Naive thymus-derived CD8-positive, alpha-beta T cell (primary cell): ENCODE measurements at regions of chr11 and their contacts with region 1.

Region 1: GRCh38 chr11:1852877-1853276 is at the start of gene LSP1:
- DNase-seq: peak; percentile 51 to 92 (median 82)
- ATAC-seq: peak; percentile 69 to 76
- H3K4me3 Mint-ChIP-seq: peak within 1 kb of the TSS; percentile 95 to 100 (median 99)
- H3K27ac Mint-ChIP-seq: peak within 1 kb of the TSS; percentile 93 to 100 (median 98)
- H3K4me1 Mint-ChIP-seq: peaks cover 14 to 77% (median 75%) of the 10 kb centered on the region in 4 donors
- H3K27me3 Mint-ChIP-seq: no peaks in the 10 kb centered on the region
- polyA plus RNA-seq, gene LSP1: 326 to 438 (median 338) TPM

Region 2: GRCh38 chr11:1782831-1783724 is 69.8 kb before region 1 on chr11:
- POLR2A ChIA-PET with region 1: no interaction called
- DNase-seq: no peak
- ATAC-seq: no peak
- H3K4me3 Mint-ChIP-seq: no peak overlapping the region
- H3K27ac Mint-ChIP-seq: no peak overlapping the region
- H3K4me1 Mint-ChIP-seq: peaks cover 3 to 32% (median 8%) of the 10 kb centered on the region in 4 donors
- H3K27me3 Mint-ChIP-seq: no peaks in the 10 kb centered on the region

Region 3: DNA sequence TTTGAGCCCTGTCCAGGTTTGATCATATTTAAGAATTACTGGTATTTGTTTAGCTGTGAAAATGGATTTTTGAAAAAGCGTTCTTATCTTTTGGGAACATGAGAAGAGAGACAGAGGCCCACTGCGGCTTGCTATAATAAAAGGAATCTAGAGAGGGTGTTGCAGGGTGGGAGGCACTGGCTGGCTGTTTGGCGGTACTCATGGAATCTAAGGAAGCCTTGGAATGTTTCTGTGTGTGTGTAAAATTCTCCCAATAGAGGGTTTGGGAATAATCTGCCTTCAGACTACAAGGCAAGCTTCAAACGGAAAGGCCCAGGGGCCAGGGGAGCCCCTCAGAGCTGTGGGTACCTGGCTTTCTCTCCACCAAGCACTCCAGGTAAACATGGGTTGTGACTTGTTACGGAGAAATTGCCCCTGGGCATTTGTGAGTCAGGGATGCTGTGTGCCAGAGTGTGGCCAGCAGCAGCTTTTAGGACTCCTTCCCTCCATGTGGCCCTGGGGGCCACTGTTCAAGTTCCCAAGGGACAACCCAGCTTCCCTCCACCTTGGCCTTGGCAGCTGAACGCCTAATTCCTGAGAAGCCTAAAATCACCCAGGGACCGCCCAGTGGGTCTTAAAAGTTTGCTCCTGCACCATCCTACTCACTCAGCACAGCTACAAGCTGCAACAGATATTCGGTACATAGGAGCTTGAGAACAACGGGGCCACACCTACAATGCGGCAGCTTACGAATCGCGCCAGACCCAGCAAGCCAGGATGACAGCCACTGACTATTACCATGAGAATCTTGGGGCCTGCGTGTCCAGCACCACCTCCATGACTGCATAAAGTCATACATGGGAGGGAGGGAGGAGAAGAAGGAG is 32.2 kb before region 1 on chr11:
- POLR2A ChIA-PET with region 1: no interaction called
- DNase-seq: no peak
- ATAC-seq: no peak
- H3K4me3 Mint-ChIP-seq: no peak overlapping the region
- H3K27ac Mint-ChIP-seq: no peak overlapping the region
- H3K4me1 Mint-ChIP-seq: peaks cover 0 to 6% (median 0%) of the 10 kb centered on the region in 4 donors
- H3K27me3 Mint-ChIP-seq: peaks cover 0 to 5% (median 0%) of the 10 kb centered on the region in 5 donors

Region 4: DNA sequence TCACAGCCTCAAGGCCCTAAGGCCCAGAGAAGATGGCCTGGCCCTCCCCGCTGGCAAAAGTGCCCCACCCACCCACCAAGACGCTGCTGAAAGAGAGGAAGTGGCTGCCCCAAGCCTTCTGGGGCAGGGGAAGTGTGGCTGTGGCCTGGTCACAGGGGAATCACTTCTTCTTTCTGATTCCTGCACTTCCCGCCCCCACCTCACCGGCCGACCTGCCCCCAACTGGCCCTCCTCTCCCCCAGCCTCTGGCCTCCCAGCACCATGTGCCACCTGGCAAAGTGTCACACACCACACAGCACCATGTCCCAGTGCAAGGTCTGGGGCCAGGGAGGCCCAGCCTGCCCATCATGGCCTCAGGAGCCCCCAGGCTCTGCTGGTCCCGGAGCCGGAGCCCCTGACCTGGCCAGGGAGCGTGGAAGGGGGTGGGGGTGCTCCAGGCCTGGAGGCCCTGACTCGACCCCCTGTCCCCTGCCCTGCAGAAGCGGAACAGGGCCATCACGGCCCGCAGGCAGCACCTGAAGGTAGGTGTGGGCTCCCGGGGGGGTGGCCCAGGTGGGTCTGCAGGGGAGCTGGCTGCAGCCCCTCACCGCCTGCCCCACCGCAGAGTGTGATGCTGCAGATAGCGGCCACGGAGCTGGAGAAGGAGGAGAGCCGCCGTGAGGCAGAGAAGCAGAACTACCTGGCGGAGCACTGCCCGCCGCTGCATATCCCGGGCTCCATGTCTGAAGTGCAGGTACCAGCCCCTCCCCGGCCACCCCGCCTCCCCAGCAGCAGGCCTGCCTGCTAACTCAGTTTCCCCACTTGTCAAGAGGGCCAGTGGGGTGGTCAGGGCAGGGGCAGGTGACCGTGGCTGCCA is 12.7 kb before region 1 on chr11:
- POLR2A ChIA-PET with region 1: interaction called, 14 read pairs
- DNase-seq: peak in 1 of 10 donors; percentile 10
- ATAC-seq: no peak
- H3K4me3 Mint-ChIP-seq: peak overlapping the region in 3 of 10 donors; percentile 7 to 47 (median 14)
- H3K27ac Mint-ChIP-seq: peak overlapping the region in 5 of 10 donors; percentile 23 to 87 (median 53)
- H3K4me1 Mint-ChIP-seq: peaks cover 25 to 35% (median 31%) of the 10 kb centered on the region in 4 donors
- H3K27me3 Mint-ChIP-seq: no peaks in the 10 kb centered on the region

Region 5: DNA sequence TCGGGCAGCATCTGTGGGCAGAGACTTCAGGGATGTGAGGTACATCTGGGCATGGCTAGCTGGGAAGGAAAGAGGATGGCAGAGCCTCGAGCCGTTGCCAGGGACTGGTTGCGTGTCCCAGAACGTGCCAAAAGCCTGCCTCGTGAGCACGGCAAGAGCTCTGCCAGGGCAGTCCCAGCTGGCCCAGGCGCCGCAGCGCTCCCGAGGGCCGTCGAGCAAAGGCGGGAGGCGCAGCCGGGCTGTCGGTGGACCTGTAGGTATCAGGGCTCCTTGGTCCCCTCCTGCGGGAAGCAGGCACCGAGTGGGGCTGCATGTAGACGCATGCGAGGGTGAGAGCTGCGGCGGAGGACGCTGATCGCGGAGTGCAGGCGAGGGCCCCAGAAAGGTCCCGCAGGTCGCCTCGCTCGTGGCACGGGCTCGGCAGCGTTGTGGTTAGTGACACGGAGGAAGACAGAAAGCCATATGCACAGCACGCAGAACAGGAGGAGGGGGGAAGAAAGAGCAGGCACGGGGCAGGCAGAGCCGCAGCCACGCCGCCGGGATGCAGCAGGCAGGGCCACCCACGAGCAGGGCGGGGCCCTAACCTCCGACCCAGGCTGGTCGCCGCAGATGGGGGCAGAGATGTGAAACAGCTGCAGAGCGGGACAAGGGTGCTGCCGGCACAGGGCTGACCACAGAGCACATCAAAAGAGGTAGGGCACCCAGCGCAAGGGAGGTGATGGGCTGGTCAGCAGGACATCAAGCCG is 18.0 kb after region 1 on chr11:
- POLR2A ChIA-PET with region 1: interaction called, 31 read pairs
- DNase-seq: peak in 9 of 10 donors; percentile 36 to 78 (median 51)
- ATAC-seq: peak; percentile 83 to 89
- H3K4me3 Mint-ChIP-seq: peak overlapping the region; percentile 76 to 97 (median 84)
- H3K27ac Mint-ChIP-seq: peak overlapping the region; percentile 58 to 96 (median 92)
- H3K4me1 Mint-ChIP-seq: peaks cover 29 to 82% (median 63%) of the 10 kb centered on the region in 4 donors
- H3K27me3 Mint-ChIP-seq: no peaks in the 10 kb centered on the region

Region 6: DNA sequence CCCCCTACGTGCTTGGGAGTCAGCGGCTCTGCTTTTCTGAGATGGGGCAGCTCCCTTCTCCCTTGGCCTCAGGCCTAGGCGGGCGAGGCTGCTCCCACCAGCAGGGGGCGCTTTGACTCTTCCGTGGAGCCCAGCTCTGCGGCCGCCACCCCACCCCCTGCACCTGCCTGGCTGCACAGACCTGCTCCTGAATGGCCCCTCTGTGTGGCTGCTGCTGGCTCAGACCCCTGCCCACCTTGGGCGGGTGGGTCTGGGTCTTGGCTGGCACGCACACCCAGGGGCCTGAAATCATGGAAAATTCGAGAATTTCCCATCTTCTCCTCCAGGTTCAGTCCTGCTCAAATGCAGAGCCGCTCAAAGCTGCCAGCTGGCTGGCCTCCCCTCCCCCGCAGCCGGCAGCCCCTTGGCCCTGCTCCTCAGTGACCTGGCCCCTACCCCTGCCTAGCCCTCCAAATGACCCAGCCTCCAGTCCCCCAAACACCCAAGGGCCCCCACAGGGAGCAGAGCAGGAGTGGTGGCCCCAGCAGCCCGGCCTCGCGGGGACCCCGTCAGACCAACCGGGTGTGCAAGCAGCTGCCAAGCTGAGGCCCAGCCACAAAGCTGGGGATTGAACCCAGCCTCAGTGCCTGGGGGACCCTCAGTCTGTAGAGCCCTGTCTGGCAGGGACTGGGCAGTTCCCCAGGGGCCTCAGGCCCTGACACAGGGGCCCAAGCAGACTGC is 29.8 kb after region 1 on chr11:
- POLR2A ChIA-PET with region 1: interaction called, 163 read pairs
- DNase-seq: peak; percentile 62 to 90 (median 80)
- ATAC-seq: peak; percentile 88 to 95
- H3K4me3 Mint-ChIP-seq: no peak overlapping the region
- H3K27ac Mint-ChIP-seq: peak overlapping the region in 5 of 10 donors; percentile 19 to 62 (median 36)
- H3K4me1 Mint-ChIP-seq: peaks cover 8 to 31% (median 27%) of the 10 kb centered on the region in 4 donors
- H3K27me3 Mint-ChIP-seq: no peaks in the 10 kb centered on the region

Region 7: DNA sequence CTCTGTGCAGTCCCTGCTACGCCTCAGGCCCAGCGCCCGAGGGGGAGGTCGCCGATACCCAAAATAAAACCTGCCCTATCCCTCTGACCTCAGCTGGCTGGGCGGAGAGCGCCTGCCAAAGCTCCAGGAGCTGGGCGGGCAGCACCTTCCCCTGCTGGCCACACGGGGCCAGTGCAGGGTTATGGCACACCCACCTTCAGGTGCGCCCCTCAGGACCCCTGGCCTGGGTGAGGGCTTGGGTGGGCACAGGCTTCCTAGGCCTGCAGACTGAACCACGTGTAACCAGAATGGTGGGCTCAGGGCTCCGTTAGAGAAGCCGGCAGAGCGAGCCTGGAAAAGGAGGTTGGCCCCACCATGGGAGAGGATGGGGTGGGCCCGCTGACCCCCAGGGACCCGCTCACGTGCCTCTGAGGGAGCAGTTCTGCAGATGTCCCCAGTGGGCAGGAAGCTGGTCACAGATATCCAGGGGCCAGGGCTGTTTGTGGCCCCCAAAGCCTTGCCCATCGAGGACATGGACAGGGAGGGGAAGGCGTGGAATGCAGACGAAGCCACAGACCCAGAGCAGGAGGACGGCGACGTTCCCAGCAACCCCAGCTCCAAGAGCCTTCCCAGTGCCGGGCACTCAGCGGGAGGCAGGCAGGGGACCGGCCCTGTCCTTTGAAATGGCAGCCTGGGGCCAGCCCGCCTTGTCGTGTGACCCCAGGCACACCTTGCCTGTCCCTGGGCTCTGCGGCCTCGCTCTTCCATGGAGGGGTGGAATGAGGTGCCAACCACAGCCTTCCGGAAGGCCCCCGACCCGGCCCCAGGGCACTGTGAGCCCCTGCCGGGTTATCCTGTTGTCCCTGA is 65.0 kb after region 1 on chr11:
- POLR2A ChIA-PET with region 1: interaction called, 10 read pairs
- DNase-seq: peak in 2 of 10 donors; percentile 8 to 23
- ATAC-seq: peak; percentile 29 to 46
- H3K4me3 Mint-ChIP-seq: peak overlapping the region in 1 of 10 donors; percentile 34
- H3K27ac Mint-ChIP-seq: no peak overlapping the region
- H3K4me1 Mint-ChIP-seq: peaks cover 16 to 48% (median 29%) of the 10 kb centered on the region in 4 donors
- H3K27me3 Mint-ChIP-seq: peaks cover 2 to 16% (median 5%) of the 10 kb centered on the region in 5 donors